HCT116 (cell line): ENCODE measurements at regions of chrX and their contacts with region 1.

Region 1: GRCh38 chrX:104343428-104344129 is 88.8 kb upstream of the ESX1 start:
- DNase-seq: peak; percentile 80
- ATAC-seq: peak; percentile 88
- H3K4me3 ChIP-seq: no peak overlapping the region
- H3K27ac ChIP-seq: no peak overlapping the region
- H3K4me1 ChIP-seq: peaks cover 0 to 3% of the 10 kb centered on the region in 2 experiments; a peak in 1 of 4 replicates
- H3K27me3 ChIP-seq: no peaks in the 10 kb centered on the region
- CTCF ChIP-seq: peak; percentile 52 to 57 (median 53)
- POLR2A ChIP-seq: no peak
- RAD21 ChIP-seq: peak; percentile 66

Region 2: GRCh38 chrX:104195489-104196084 is 148.0 kb before region 1 on chrX:
- CTCF ChIA-PET with region 1: no interaction called
- POLR2A ChIA-PET with region 1: no interaction called
- RAD21 ChIA-PET with region 1: no interaction called
- intact Hi-C with region 1: no loop called
- DNase-seq: peak; percentile 1
- ATAC-seq: no peak; the same call in 1 of the 2 replicates
- H3K4me3 ChIP-seq: no peak overlapping the region
- H3K27ac ChIP-seq: no peak overlapping the region
- H3K4me1 ChIP-seq: no peaks in the 10 kb centered on the region
- H3K27me3 ChIP-seq: no peaks in the 10 kb centered on the region
- CTCF ChIP-seq: peak; percentile 21 to 47 (median 46); a peak in 4 of 6 replicates
- POLR2A ChIP-seq: no peak
- RAD21 ChIP-seq: peak; percentile 40; the same call in 1 of the 2 replicates

Region 3: GRCh38 chrX:104284507-104284906 is 59.1 kb before region 1 on chrX:
- CTCF ChIA-PET with region 1: no interaction called
- POLR2A ChIA-PET with region 1: no interaction called
- RAD21 ChIA-PET with region 1: no interaction called
- intact Hi-C with region 1: no loop called
- DNase-seq: no peak
- ATAC-seq: no peak
- H3K4me3 ChIP-seq: no peak overlapping the region
- H3K27ac ChIP-seq: no peak overlapping the region
- H3K4me1 ChIP-seq: no peaks in the 10 kb centered on the region
- H3K27me3 ChIP-seq: no peaks in the 10 kb centered on the region
- CTCF ChIP-seq: no peak
- POLR2A ChIP-seq: no peak
- RAD21 ChIP-seq: no peak

Region 4: DNA sequence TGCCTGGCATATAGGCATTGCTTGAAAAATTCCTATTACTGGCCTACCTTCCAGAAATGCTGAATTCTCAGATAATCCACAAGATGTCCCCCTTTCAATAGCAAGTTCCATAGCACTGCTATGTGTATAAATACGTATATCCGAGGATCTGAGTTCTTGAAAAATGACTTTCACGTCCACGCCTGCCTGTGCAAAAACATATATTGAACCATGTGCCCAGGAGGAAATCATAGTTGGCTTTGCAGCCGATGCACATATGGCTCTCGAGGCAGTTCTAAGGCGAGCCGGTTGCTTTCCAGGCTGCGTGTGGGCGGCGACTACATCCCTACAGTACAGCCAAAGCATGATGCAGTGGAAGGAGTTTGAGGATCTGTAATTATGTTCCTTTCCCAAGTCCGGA is 33.5 kb before region 1 on chrX:
- CTCF ChIA-PET with region 1: no interaction called
- POLR2A ChIA-PET with region 1: no interaction called
- RAD21 ChIA-PET with region 1: no interaction called
- intact Hi-C with region 1: loop called (anchors 1 kb)
- DNase-seq: no peak
- ATAC-seq: peak; percentile 86
- H3K4me3 ChIP-seq: peak overlapping the region in 1 of 2 experiments; percentile 18; a peak in 1 of 4 replicates
- H3K27ac ChIP-seq: no peak overlapping the region
- H3K4me1 ChIP-seq: no peaks in the 10 kb centered on the region
- H3K27me3 ChIP-seq: no peaks in the 10 kb centered on the region
- CTCF ChIP-seq: peak; percentile 18 to 53 (median 48); a peak in 4 of 6 replicates
- POLR2A ChIP-seq: no peak
- RAD21 ChIP-seq: peak; percentile 71

Region 5: GRCh38 chrX:104659005-104659744 is 315.6 kb after region 1 on chrX:
- CTCF ChIA-PET with region 1: no interaction called
- POLR2A ChIA-PET with region 1: no interaction called
- RAD21 ChIA-PET with region 1: no interaction called
- intact Hi-C with region 1: no loop called
- DNase-seq: no peak
- ATAC-seq: no peak
- H3K4me3 ChIP-seq: no peak overlapping the region
- H3K27ac ChIP-seq: no peak overlapping the region
- H3K4me1 ChIP-seq: no peaks in the 10 kb centered on the region
- H3K27me3 ChIP-seq: no peaks in the 10 kb centered on the region
- CTCF ChIP-seq: no peak
- POLR2A ChIP-seq: no peak
- RAD21 ChIP-seq: no peak